RWPE1 (cell line): ENCODE measurements at regions of chr20 and their contacts with region 1.

Region 1: GRCh38 chr20:31822421-31823330 is 3.5 kb downstream of the MYLK2 start:
- DNase-seq: peak; percentile 92
- H3K27ac ChIP-seq: peak overlapping the region; percentile 28
- CTCF ChIP-seq: peak; percentile 100

Region 2: DNA sequence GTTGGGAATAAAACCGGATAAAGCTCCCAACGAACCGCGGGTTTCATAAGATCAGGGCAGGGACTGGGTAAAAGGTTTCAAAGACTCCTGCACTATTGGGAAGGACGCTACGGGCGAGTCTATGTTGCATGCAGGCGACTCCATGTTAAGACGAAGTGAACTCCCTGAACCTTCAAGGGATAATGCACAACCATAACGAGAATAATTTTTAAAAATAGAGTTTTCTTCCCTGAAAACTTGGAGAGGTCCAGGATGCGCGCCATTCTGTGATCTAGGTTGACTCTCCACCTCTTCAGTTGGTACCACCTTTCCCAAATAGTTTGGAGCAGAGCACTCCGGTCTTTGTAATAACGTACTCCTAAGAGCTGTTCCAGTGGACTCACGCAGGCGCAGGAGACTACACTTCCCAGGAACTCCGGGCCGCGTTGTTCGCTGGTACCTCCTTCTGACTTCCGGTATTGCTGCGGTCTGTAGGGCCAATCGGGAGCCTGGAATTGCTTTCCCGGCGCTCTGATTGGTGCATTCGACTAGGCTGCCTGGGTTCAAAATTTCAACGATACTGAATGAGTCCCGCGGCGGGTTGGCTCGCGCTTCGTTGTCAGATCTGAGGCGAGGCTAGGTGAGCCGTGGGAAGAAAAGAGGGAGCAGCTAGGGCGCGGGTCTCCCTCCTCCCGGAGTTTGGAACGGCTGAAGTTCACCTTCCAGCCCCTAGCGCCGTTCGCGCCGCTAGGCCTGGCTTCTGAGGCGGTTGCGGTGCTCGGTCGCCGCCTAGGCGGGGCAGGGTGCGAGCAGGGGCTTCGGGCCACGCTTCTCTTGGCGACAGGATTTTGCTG is 83.7 kb before region 1 on chr20 and contains the start of gene TPX2:
- CTCF ChIA-PET with region 1: no interaction called
- POLR2A ChIA-PET with region 1: no interaction called
- DNase-seq: peak; percentile 100
- H3K27ac ChIP-seq: peak within 1 kb of the TSS; percentile 85
- CTCF ChIP-seq: no peak; the same call in 1 of the 2 replicates

Region 3: DNA sequence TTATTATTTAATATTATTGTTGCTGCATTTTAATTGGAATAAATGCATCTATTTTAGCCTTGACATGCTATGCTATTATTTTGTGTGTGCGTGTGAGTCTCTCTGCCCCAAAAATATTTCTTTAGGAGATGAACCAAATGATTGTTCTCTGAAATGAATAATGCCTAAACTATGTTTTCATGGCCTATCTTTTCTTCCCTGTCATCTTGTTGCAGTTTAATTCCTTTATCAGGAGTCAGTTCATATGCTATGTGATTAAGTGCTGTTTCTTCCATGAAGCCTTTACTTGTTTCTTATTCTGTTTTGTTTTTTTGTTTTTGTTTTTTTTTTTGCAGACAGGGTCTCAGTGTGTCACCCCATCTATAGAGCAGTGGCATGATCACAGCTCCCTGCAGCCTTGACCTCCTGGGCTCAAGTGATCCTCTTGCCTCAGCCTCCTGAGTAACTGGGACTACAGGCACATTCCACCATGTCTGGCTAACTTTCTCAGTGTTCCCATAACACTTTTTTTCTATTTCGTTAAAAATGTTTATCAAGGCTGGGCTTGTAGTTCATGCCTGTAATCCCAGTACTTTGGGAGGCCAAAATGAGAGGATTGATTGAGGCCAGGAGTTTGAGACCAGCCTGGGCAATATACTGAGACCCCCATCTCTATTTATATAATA is 57.9 kb before region 1 on chr20:
- CTCF ChIA-PET with region 1: no interaction called
- POLR2A ChIA-PET with region 1: no interaction called
- DNase-seq: no peak
- H3K27ac ChIP-seq: no peak overlapping the region
- CTCF ChIP-seq: no peak

Region 4: GRCh38 chr20:31806564-31807355 is 15.9 kb before region 1 on chr20:
- CTCF ChIA-PET with region 1: interaction called, 13 read pairs
- POLR2A ChIA-PET with region 1: no interaction called
- DNase-seq: no peak
- H3K27ac ChIP-seq: no peak overlapping the region
- CTCF ChIP-seq: no peak

Region 5: DNA sequence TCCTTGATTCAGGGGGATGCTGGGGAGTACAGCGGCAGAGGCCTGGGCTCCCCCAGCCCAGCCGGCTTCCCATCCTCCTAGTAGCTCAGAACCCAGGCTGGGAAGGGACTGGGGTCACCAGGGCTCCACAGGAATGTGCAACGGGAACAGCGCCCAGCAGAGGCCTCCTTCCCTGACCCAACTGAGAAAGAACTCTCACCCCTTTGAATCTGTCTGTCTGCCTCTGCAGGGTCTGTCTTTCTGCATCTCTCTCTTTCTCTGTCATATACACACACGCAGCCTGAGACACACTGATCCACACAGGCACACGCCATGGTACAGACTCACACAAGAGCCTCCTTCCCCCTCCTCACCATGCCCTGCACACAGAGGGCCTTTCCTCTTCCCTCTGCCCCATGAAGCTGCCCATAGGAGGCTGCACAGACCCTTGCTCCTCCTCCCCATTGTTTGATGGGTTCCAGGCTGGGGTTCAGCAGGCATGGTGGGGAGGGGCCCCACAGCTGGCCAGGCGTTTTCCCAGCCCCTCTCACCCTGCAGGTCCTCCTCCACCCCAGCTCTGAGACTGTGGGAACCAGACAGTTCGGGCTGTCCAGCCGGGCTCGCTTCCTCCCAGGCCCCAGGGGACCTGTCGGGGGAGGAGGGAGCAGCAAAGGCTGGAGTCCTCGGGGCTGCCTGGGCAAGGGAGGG is 19.9 kb after region 1 on chr20:
- CTCF ChIA-PET with region 1: interaction called, 66 read pairs
- POLR2A ChIA-PET with region 1: no interaction called
- DNase-seq: no peak
- H3K27ac ChIP-seq: peak overlapping the region; percentile 46
- CTCF ChIP-seq: no peak

Region 6: DNA sequence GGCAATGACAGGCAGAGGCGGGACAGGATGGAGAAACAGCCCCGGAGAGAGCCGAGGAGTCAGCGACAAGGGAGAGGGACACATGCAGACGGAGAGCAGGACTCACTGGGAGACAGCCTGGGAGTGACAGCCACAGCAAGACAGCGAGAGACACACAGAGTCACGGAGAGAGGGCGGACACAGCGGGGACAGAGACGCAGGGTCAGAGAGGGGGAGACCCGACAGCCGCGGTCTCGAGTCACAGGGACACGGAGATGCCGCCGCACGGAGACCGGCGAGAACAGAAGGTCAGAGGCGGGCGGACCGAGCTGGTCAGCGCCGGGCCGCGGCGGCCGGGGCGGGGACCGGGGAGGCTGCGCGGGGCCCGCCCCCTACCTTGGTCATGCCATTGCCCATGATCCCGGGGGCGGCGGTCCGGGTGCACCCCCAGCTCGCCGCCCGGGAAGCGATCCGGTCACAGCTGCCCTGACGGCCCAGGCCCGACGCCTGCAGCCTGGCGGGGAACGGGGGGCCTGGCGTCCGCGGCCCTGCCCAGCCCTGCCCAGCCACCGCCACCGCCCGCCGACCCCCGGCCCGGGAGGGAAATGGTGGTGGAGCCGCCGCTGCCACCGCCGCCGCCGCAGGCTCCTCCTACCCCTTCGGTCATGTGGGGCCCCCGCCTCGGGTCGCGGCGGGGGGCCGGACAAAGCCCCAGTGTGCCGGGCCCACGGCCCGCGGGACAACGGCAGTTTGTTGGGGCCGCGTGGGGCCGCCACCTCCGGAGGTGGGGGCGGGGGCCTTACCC is 47.5 kb after region 1 on chr20 and contains the starts of genes DUSP15 and TTLL9:
- CTCF ChIA-PET with region 1: interaction called, 12 read pairs
- POLR2A ChIA-PET with region 1: no interaction called
- DNase-seq: no peak
- H3K27ac ChIP-seq: no peak within 1 kb of the TSS
- CTCF ChIP-seq: no peak

Region 7: DNA sequence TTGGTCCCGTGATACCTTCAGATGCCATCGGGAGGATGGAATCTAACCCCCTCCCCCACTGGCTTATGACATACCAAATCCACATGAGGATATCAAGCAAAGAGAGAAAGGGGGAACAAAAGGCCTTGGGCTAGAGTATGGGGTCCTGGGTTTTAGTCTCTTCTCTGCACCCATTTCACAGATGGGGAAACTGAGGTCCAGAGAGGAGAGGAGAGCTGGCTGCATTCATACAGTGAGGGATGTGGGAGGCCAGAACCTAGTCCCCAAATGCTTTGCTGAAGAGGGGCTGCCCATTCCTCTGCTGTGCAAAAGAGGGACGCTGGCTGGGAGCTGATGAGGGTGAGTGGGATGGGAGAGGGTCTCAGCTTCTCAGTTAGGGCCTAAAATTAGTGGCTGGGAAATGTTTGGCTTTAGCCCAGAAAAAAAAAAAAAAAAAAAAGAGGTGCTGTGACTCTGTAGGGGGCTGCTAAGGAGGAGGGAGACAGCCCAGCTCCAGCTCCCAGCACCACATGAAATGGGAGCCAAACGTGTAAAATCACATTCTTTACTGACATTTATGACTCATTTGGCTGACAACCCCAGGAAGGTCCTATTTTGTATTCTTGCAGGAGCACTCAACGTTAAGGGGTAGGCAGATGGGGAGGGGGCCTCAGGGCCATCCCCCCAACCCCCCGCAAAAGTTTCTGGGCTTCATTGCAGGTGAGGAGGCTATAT is 157.2 kb after region 1 on chr20:
- CTCF ChIA-PET with region 1: interaction called, 10 read pairs
- POLR2A ChIA-PET with region 1: no interaction called
- DNase-seq: no peak
- H3K27ac ChIP-seq: no peak overlapping the region
- CTCF ChIP-seq: no peak

Region 8: GRCh38 chr20:32031007-32031958 is 208.6 kb after region 1 on chr20:
- CTCF ChIA-PET with region 1: interaction called, 81 read pairs
- POLR2A ChIA-PET with region 1: no interaction called
- DNase-seq: peak; percentile 94
- H3K27ac ChIP-seq: no peak overlapping the region
- CTCF ChIP-seq: peak; percentile 100

Region 9: DNA sequence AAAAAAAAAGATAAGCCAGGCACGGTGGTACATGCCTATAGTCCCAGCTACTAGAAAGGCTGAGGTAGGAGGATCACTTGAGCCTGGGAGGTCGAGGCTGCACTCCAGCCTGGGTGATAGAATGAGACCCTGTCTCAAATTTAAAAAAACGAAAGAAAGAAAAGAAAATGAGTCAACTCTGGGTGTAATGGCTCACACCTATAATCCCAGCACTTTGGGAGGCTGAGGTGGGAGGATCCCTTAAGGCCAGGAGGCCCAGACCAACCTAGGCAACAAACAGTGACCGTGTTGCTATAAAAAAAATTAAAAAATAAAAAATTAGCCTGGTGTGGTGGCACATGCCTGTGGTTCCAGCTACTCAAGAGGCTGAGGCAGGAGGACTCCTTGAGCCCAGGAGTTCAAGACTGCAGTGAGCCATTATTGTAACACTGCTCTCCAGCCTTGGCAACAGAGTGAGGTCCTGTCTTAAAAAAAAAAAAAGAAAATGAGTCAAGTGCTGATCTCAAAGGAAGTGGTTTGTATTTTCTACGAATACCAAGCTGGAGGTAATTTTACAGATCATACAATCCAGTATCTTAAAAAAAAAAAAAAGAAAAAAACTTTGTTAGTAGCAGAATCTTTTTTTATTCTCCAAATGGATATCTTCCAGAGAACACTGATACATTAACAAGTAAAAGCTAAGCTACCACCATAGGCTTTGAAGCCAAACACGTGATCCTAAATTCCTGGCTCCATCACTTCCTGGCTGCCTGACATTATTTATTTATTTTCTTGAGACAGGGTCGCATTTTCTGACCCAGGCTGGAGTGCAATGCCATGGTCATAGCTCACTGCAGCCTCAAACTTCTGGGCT is 914.9 kb after region 1 on chr20:
- CTCF ChIA-PET with region 1: interaction called, 10 read pairs
- POLR2A ChIA-PET with region 1: no interaction called
- DNase-seq: no peak
- H3K27ac ChIP-seq: no peak overlapping the region
- CTCF ChIP-seq: no peak